CD4-positive, alpha-beta T cell (primary cell): ENCODE measurements at regions of chr1 and their contacts with region 1.

Region 1: DNA sequence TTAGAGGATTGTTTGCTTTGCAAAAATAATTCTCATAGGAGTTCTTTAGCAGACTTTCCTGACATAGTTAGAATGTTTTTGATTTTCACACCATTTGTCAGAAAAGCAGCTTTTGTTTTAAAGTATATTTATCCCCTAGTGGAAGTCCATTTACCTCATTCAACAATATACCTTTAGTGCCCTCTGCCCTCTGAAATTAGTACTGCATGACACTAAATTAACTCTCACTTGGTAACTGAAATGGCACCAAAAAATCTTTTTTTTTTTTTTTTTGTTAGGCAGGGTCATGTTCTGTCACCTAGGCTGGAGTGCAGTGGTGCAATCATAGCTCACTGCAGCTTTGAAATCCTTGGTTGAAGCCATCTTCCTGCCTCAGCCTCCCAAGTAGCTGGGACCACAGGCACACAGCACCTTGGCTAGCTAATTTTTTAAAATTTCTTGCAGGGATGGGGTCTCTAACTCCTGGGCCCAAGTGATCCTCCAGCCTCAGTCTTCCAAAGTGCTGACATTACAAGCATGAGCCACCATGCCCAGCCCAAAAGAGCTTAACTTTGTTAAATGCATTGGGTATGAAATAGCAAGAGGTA is 13.6 kb downstream of the LRRC42 start:
- DNase-seq: peak in 4 of 14 experiments; percentile 11 to 72 (median 65)
- ATAC-seq: peak; percentile 86
- H3K4me3 ChIP-seq: no peak overlapping the region
- H3K4me3 Mint-ChIP-seq: no peak overlapping the region
- H3K27ac ChIP-seq: no peak overlapping the region
- H3K27ac Mint-ChIP-seq: no peak overlapping the region
- H3K4me1 ChIP-seq: no peaks in the 10 kb centered on the region
- H3K4me1 Mint-ChIP-seq: peaks cover 4% of the 10 kb centered on the region
- H3K27me3 ChIP-seq: no peaks in the 10 kb centered on the region
- H3K27me3 Mint-ChIP-seq: no peaks in the 10 kb centered on the region
- CTCF ChIP-seq: peak; percentile 72

Region 2: DNA sequence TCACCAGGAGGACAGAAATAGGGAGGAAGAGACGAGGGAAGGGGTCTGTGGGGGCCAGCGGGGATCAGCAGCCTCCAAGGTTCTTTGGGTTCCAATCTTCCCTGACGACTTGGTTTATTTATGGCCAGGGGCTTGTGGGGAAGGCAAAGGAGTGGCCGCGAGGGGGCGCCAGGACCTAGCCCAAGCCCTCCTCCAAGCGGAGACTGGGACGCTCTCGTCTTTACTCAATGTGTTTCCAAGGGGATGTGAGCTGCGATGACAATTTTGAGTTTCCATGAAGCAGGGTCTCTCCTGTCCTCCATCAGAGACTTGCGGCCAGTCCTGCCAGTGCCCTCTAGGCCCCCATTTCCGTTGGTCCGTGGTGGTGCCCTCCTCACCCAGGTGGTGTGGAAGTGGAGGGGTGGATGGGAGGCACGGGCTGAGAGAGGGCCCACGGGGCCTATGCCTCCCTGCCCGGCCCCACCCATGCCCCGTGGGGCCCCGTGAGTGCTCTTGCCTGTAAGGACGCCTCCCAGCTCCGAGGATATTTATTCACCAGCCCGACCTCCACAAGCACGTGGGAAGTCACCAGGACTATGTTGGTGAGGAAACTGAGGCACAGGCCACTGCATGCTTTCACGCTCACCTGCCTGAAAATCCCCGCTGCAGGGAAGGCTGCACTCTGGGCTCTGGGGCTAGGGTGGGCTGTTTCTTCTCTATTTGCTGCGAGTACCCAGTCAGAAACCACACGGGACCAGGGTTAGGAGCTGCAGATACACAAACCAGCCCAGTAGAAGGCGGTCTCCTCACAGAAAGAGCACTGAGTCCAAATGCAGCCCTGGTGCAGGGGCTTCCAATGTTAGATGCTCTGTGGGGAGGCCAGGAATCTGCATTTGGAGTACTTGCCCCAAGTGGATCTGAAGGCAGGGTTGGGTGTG is 474.0 kb before region 1 on chr1:
- CTCF ChIA-PET with region 1: no interaction called
- POLR2A ChIA-PET with region 1: no interaction called
- intact Hi-C with region 1: loop called in 1 of 2 experiments (anchors 2 kb)
- DNase-seq: peak; percentile 24 to 75 (median 46)
- ATAC-seq: no peak
- H3K4me3 ChIP-seq: no peak overlapping the region
- H3K4me3 Mint-ChIP-seq: no peak overlapping the region
- H3K27ac ChIP-seq: no peak overlapping the region
- H3K27ac Mint-ChIP-seq: no peak overlapping the region
- H3K4me1 ChIP-seq: peaks cover 7% of the 10 kb centered on the region
- H3K4me1 Mint-ChIP-seq: no peaks in the 10 kb centered on the region
- H3K27me3 ChIP-seq: peaks cover 3 to 12% of the 10 kb centered on the region in 2 experiments
- H3K27me3 Mint-ChIP-seq: peaks cover 42% of the 10 kb centered on the region
- CTCF ChIP-seq: peak; percentile 76

Region 3: GRCh38 chr1:53860967-53861411 is 98.8 kb before region 1 on chr1:
- CTCF ChIA-PET with region 1: interaction called, 57 read pairs
- POLR2A ChIA-PET with region 1: interaction called, 23 read pairs
- intact Hi-C with region 1: loop called (anchors 1 kb)
- DNase-seq: peak; percentile 8 to 80 (median 32)
- ATAC-seq: peak; percentile 88
- H3K4me3 ChIP-seq: no peak overlapping the region
- H3K4me3 Mint-ChIP-seq: no peak overlapping the region
- H3K27ac ChIP-seq: no peak overlapping the region
- H3K27ac Mint-ChIP-seq: no peak overlapping the region
- H3K4me1 ChIP-seq: peaks cover 5% of the 10 kb centered on the region
- H3K4me1 Mint-ChIP-seq: peaks cover 9% of the 10 kb centered on the region
- H3K27me3 ChIP-seq: no peaks in the 10 kb centered on the region
- H3K27me3 Mint-ChIP-seq: no peaks in the 10 kb centered on the region
- CTCF ChIP-seq: peak; percentile 79

Region 4: DNA sequence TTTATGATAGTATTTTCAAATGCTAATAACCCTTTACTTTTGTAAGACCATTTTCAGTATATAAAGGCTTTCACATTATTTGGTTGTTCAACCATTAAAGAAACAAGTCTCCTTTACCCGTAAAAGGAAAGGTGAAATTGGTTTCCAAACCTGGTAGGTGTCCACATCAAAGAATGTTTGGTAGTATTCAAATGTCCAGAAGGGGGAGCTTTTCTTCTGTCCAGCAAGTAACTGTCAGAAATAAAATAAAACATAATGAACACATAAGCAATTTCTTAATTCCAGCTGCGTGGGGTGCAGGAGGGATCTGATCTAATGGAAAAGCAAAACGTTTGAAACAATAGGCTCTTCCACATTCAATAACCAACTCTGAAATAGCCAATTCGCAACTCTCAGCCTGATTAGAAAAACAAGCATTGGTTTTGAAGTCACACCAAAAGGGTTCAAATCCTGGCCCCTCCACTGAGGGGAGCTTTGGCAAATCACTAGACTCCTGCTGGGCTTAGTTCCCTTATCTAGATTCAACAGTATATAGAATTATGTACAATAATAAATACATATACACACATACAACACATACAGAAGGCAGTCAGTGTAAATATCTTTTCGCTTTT is 81.2 kb before region 1 on chr1:
- CTCF ChIA-PET with region 1: interaction called, 25 read pairs
- POLR2A ChIA-PET with region 1: no interaction called
- intact Hi-C with region 1: no loop called
- DNase-seq: peak in 3 of 14 experiments; percentile 37 to 53 (median 52)
- ATAC-seq: no peak
- H3K4me3 ChIP-seq: no peak overlapping the region
- H3K4me3 Mint-ChIP-seq: no peak overlapping the region
- H3K27ac ChIP-seq: no peak overlapping the region
- H3K27ac Mint-ChIP-seq: no peak overlapping the region
- H3K4me1 ChIP-seq: no peaks in the 10 kb centered on the region
- H3K4me1 Mint-ChIP-seq: peaks cover 12% of the 10 kb centered on the region
- H3K27me3 ChIP-seq: no peaks in the 10 kb centered on the region
- H3K27me3 Mint-ChIP-seq: no peaks in the 10 kb centered on the region
- CTCF ChIP-seq: peak; percentile 63

Region 5: GRCh38 chr1:53934170-53934765 is 25.5 kb before region 1 on chr1:
- CTCF ChIA-PET with region 1: no interaction called
- POLR2A ChIA-PET with region 1: no interaction called
- intact Hi-C with region 1: no loop called
- DNase-seq: no peak
- ATAC-seq: no peak
- H3K4me3 ChIP-seq: no peak overlapping the region
- H3K4me3 Mint-ChIP-seq: no peak overlapping the region
- H3K27ac ChIP-seq: no peak overlapping the region
- H3K27ac Mint-ChIP-seq: no peak overlapping the region
- H3K4me1 ChIP-seq: no peaks in the 10 kb centered on the region
- H3K4me1 Mint-ChIP-seq: peaks cover 11% of the 10 kb centered on the region
- H3K27me3 ChIP-seq: no peaks in the 10 kb centered on the region
- H3K27me3 Mint-ChIP-seq: no peaks in the 10 kb centered on the region
- CTCF ChIP-seq: no peak

Region 6: DNA sequence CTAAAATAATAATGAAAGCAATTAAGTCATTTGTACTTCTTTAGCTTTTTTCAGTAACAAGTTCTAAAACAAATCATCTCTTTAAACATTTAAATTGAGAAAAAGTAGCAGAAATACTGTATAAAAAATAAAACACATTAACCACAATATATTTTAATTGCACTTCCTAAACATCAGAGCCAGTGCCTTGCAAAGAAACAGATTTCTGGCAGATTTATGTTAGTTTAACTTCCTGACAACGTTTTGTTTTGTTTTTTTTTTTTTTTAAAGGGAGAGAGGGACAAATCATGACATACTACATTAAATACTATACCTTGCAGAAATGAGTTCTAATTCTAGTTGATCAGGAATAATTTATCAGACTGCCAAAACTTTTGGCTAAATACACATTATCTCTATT is 82.0 kb after region 1 on chr1:
- CTCF ChIA-PET with region 1: no interaction called
- POLR2A ChIA-PET with region 1: no interaction called
- intact Hi-C with region 1: loop called in 1 of 2 experiments (anchors 5 kb)
- DNase-seq: no peak
- ATAC-seq: no peak
- H3K4me3 ChIP-seq: no peak overlapping the region
- H3K4me3 Mint-ChIP-seq: no peak overlapping the region
- H3K27ac ChIP-seq: no peak overlapping the region
- H3K27ac Mint-ChIP-seq: no peak overlapping the region
- H3K4me1 ChIP-seq: no peaks in the 10 kb centered on the region
- H3K4me1 Mint-ChIP-seq: peaks cover 22% of the 10 kb centered on the region
- H3K27me3 ChIP-seq: no peaks in the 10 kb centered on the region
- H3K27me3 Mint-ChIP-seq: no peaks in the 10 kb centered on the region
- CTCF ChIP-seq: no peak